Activated CD4-positive, alpha-beta memory T cell treated with anti-CD3 and anti-CD28 coated beads, Interleukin-2, amount 10 ng/mL, durations not matched to agents 7 days and 5 days (primary cell): ENCODE measurements at regions of chr16 and their contacts with region 1.

Region 1: GRCh38 chr16:68264128-68265077 is at the start of gene SLC7A6:
- DNase-seq: peak; percentile 87
- H3K4me3 Mint-ChIP-seq: peak within 1 kb of the TSS; percentile 98
- H3K27ac Mint-ChIP-seq: peak within 1 kb of the TSS; percentile 93
- H3K4me1 Mint-ChIP-seq: peaks cover 48% of the 10 kb centered on the region
- H3K27me3 Mint-ChIP-seq: no peaks in the 10 kb centered on the region
- total RNA-seq, gene SLC7A6: 66.7 to 68.9 TPM

Region 2: GRCh38 chr16:68227183-68227793 is 37.1 kb before region 1 on chr16:
- CTCF ChIA-PET with region 1: no interaction called
- POLR2A ChIA-PET with region 1: no interaction called
- DNase-seq: no peak
- H3K4me3 Mint-ChIP-seq: no peak overlapping the region
- H3K27ac Mint-ChIP-seq: peak overlapping the region; percentile 64
- H3K4me1 Mint-ChIP-seq: peaks cover 33% of the 10 kb centered on the region
- H3K27me3 Mint-ChIP-seq: no peaks in the 10 kb centered on the region

Region 3: GRCh38 chr16:68237243-68238028 is 27.0 kb before region 1 on chr16:
- CTCF ChIA-PET with region 1: interaction called, 15 read pairs
- POLR2A ChIA-PET with region 1: interaction called, 3 read pairs
- DNase-seq: peak; percentile 90
- H3K4me3 Mint-ChIP-seq: peak overlapping the region; percentile 96
- H3K27ac Mint-ChIP-seq: peak overlapping the region; percentile 85
- H3K4me1 Mint-ChIP-seq: peaks cover 32% of the 10 kb centered on the region
- H3K27me3 Mint-ChIP-seq: peaks cover 4% of the 10 kb centered on the region

Region 4: DNA sequence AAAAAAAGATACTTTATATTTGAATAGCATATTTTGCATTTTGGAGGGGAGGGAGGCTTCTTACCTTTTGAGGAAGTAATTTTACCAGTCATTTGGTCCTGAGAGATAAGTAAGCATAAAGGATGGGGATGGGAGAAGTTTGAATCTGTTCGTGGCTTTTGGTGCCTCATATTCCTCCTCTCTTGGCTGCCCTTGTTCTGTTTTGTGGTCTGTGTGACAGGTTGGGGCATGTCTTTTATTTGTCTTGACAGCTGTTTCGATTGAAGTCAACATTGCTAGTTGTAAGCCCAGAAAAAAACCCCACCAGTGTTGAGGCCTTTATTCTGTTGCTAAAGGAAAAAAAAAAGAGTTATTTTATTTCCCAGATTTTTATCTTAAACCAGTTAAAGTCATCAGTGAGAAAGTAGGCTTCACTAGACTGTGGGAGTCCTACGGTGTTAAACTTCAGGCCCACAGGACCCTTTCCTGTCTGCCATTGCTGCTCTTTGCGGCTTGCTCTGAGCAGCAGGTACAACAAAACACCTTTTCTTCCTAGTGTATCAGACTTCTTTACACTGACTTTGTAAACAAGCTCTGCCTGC is 11.3 kb after region 1 on chr16:
- CTCF ChIA-PET with region 1: interaction called, 96 read pairs
- POLR2A ChIA-PET with region 1: interaction called, 64 read pairs
- DNase-seq: peak; percentile 45
- H3K4me3 Mint-ChIP-seq: peak overlapping the region; percentile 38
- H3K27ac Mint-ChIP-seq: peak overlapping the region; percentile 91
- H3K4me1 Mint-ChIP-seq: peaks cover 69% of the 10 kb centered on the region
- H3K27me3 Mint-ChIP-seq: no peaks in the 10 kb centered on the region

Region 5: GRCh38 chr16:68298907-68299561 is 34.6 kb after region 1 on chr16:
- CTCF ChIA-PET with region 1: interaction called, 243 read pairs
- POLR2A ChIA-PET with region 1: interaction called, 11 read pairs
- DNase-seq: no peak
- H3K4me3 Mint-ChIP-seq: no peak overlapping the region
- H3K27ac Mint-ChIP-seq: peak overlapping the region; percentile 12
- H3K4me1 Mint-ChIP-seq: peaks cover 10% of the 10 kb centered on the region
- H3K27me3 Mint-ChIP-seq: no peaks in the 10 kb centered on the region

Region 6: GRCh38 chr16:68319185-68319908 is 54.9 kb after region 1 on chr16:
- CTCF ChIA-PET with region 1: interaction called, 285 read pairs
- POLR2A ChIA-PET with region 1: interaction called, 6 read pairs
- DNase-seq: peak; percentile 30
- H3K4me3 Mint-ChIP-seq: no peak overlapping the region
- H3K27ac Mint-ChIP-seq: peak overlapping the region; percentile 29
- H3K4me1 Mint-ChIP-seq: peaks cover 19% of the 10 kb centered on the region
- H3K27me3 Mint-ChIP-seq: no peaks in the 10 kb centered on the region

Region 7: DNA sequence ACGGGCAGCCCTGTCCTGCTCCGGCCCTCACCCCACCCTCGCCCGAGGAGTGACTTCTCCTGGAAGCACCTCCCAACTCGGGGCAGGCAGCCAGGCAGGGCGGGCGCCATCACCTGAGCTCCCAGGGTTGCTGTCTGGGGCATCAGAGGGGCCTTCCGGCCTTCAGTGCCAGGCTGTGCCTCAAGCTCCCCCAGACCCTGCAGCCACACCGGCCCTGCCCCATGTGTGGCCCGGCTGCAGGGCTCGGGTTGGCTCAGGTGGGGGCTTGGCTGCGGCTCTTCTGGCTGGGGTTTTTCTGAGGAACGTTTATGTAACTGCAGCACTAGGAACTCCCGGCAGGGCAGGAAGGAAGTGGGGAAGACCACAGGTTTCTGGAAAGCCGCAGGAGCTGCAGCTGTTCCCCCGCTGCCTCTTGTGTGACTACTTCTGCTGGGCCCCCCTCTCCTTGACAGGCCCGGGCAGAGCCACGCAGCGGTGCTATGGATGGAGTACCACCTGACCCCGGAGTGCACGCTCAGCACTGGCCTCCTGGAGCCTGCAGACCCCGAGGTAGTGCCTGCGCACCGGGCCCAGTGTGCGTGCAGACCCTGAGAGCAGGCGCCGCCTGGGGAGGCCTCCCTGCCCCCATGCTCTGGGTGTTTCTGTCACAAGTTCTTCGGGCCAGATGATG is 92.0 kb after region 1 on chr16:
- CTCF ChIA-PET with region 1: interaction called, 26 read pairs
- POLR2A ChIA-PET with region 1: interaction called, 6 read pairs
- DNase-seq: peak; percentile 87
- H3K4me3 Mint-ChIP-seq: peak overlapping the region; percentile 43
- H3K27ac Mint-ChIP-seq: peak overlapping the region; percentile 18
- H3K4me1 Mint-ChIP-seq: peaks cover 36% of the 10 kb centered on the region
- H3K27me3 Mint-ChIP-seq: no peaks in the 10 kb centered on the region

Region 8: GRCh38 chr16:68553186-68553585 is 288.8 kb after region 1 on chr16:
- CTCF ChIA-PET with region 1: no interaction called
- POLR2A ChIA-PET with region 1: no interaction called
- DNase-seq: no peak
- H3K4me3 Mint-ChIP-seq: no peak overlapping the region
- H3K27ac Mint-ChIP-seq: no peak overlapping the region
- H3K4me1 Mint-ChIP-seq: peaks cover 11% of the 10 kb centered on the region
- H3K27me3 Mint-ChIP-seq: no peaks in the 10 kb centered on the region